Activated CD4-positive, alpha-beta memory T cell treated with anti-CD3 and anti-CD28 coated beads, Interleukin-2, amount 10 ng/mL, durations not matched to agents 7 days and 5 days (primary cell): ENCODE measurements at regions of chr12 and their contacts with region 1.

Region 1: GRCh38 chr12:62799126-62799736 is 135.7 kb downstream of the PPM1H start:
- DNase-seq: peak; percentile 52
- H3K4me3 Mint-ChIP-seq: no peak overlapping the region
- H3K27ac Mint-ChIP-seq: no peak overlapping the region
- H3K4me1 Mint-ChIP-seq: no peaks in the 10 kb centered on the region
- H3K27me3 Mint-ChIP-seq: no peaks in the 10 kb centered on the region

Region 2: GRCh38 chr12:62435303-62436163 is 363.7 kb before region 1 on chr12:
- CTCF ChIA-PET with region 1: interaction called, 112 read pairs
- POLR2A ChIA-PET with region 1: no interaction called
- DNase-seq: peak; percentile 42
- H3K4me3 Mint-ChIP-seq: peak overlapping the region; percentile 58
- H3K27ac Mint-ChIP-seq: no peak overlapping the region
- H3K4me1 Mint-ChIP-seq: peaks cover 20% of the 10 kb centered on the region
- H3K27me3 Mint-ChIP-seq: peaks cover 44% of the 10 kb centered on the region

Region 3: DNA sequence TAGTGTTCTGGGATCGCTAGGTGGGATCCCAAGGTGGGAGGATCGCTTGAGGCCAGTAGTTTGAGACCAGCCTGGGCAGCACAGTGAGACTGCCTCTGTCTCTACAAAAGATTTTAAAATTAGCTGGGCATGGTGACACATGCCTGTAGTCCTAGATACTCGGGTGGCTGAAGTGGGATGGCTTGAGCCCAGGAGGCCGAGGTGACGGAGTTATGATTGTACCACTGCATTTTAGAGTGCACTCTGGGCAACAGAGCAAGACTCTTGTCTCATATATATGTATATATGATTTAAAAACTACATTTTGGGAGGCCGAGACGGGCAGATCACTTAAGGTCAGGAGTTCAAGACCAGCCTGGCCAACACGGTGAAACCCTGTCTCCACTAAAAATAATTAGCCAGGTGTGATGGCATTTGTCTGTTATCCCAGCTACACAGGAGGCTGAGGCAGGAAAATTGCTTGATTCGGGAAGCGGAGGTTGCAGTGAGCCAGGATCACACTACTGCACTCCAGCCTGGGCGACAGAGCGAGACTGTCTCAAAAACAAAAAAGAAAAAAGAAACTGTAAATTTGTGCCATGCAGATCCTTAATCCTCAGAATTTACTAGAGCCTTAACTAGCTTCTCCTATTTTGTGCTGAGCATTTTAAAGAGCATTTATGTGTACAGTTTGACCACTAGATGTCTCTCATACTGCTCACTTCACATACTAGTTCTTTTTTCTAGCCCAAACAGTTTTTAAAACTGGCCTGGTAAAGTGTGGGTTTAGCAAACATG is 217.8 kb before region 1 on chr12:
- CTCF ChIA-PET with region 1: interaction called, 106 read pairs
- POLR2A ChIA-PET with region 1: no interaction called
- DNase-seq: no peak
- H3K4me3 Mint-ChIP-seq: no peak overlapping the region
- H3K27ac Mint-ChIP-seq: no peak overlapping the region
- H3K4me1 Mint-ChIP-seq: peaks cover 2% of the 10 kb centered on the region
- H3K27me3 Mint-ChIP-seq: no peaks in the 10 kb centered on the region

Region 4: GRCh38 chr12:62813031-62813829 is 14.0 kb after region 1 on chr12:
- CTCF ChIA-PET with region 1: interaction called, 14 read pairs
- POLR2A ChIA-PET with region 1: no interaction called
- DNase-seq: peak; percentile 49
- H3K4me3 Mint-ChIP-seq: no peak overlapping the region
- H3K27ac Mint-ChIP-seq: no peak overlapping the region
- H3K4me1 Mint-ChIP-seq: peaks cover 7% of the 10 kb centered on the region
- H3K27me3 Mint-ChIP-seq: peaks cover 22% of the 10 kb centered on the region